Activated CD4-positive, alpha-beta T cell treated with anti-CD3 and anti-CD28 coated beads, Interleukin-2, amount 10 ng/mL, durations not matched to agents 24 days and 14 days (primary cell): ENCODE measurements at regions of chr15 and their contacts with region 1.

Region 1: DNA sequence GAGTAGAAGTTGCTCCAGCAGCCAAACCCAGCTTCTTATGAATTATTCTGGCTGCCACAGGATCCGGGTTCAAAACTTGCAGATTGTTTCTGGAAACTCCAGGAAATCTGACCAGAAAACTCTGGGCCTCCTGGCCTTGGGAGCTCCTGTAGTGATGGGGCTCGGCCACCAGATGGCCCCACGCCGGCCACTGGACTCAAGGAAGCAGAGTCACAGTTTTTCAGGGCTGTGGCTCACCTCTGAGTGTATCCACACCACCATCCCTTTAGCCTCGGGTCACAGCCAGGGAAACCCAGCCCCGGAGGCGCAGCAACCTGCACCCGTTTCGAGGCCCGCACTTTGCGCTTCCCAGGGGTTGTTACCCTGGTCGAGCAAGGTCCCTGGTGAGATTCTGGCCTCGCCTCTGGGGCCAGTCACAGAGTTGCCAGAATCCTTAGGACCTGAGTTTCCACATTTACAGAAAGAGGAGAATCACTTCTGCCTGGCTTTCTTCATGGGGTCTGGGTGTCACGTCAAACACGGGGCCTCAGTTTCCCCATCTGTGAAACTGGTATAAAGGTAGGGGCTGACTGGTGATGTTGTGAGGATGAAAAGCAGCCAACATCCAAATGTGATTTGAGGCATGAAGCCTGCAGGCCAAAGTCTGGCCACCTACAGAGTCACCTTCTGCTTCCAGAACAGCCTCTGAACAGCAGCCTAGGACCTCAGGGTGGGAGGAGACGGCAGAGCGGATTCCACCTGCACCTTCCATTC is 53.5 kb upstream of the LCTL start:
- DNase-seq: peak; percentile 85
- H3K4me3 Mint-ChIP-seq: no peak overlapping the region
- H3K27ac Mint-ChIP-seq: no peak overlapping the region
- H3K4me1 Mint-ChIP-seq: peaks cover 3% of the 10 kb centered on the region
- H3K27me3 Mint-ChIP-seq: peaks cover 22% of the 10 kb centered on the region

Region 2: GRCh38 chr15:66578286-66578875 is 40.9 kb before region 1 on chr15:
- intact Hi-C with region 1: no loop called
- DNase-seq: no peak
- H3K4me3 Mint-ChIP-seq: no peak overlapping the region
- H3K27ac Mint-ChIP-seq: peak overlapping the region; percentile 58
- H3K4me1 Mint-ChIP-seq: peaks cover 2% of the 10 kb centered on the region
- H3K27me3 Mint-ChIP-seq: no peaks in the 10 kb centered on the region

Region 3: GRCh38 chr15:66774001-66774814 is 154.9 kb after region 1 on chr15:
- intact Hi-C with region 1: loop called (anchors 1 kb)
- DNase-seq: peak; percentile 86
- H3K4me3 Mint-ChIP-seq: no peak overlapping the region
- H3K27ac Mint-ChIP-seq: no peak overlapping the region
- H3K4me1 Mint-ChIP-seq: no peaks in the 10 kb centered on the region
- H3K27me3 Mint-ChIP-seq: no peaks in the 10 kb centered on the region

Region 4: DNA sequence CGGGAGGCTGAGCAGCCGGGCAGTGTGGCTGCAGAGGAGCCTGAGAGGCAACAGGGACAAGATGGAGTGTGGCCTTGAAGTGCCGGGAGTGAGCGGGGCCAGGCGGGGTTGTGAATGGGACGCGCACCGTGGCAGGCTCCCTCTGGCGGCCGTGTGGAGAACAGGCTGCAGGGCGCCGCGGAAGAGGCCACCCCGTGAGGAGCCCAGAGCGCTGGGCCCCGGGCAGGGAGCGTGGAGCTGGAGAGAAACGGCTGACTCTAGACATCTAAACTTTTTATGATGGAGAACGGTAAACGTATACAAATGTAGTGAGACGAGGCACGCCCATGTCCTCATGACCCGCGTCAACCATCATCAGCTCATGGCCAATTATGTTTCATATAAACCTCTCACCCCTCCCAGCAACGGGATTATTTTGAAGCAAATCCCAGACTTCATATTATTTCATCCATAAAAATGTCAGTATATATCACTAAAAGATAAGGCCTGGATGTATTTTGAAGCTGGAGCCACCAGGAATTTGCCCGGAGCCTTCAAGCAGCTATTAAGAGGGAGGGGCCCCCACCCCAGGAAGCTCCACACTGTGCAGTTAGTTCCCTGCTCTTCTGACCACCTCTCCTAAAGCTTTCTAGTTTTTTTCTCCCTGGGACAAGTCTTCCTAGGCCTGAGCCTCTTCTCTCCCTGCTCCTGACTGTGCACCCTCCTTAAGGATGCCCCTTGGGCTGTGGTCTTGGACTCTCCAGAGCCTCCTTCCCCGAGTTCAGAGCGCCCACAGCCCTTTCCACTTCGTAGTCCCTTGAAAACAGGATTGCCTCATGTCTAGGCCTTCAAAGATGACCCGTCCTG is 232.1 kb after region 1 on chr15:
- intact Hi-C with region 1: loop called (anchors 1 kb)
- DNase-seq: peak; percentile 93
- H3K4me3 Mint-ChIP-seq: peak overlapping the region; percentile 26
- H3K27ac Mint-ChIP-seq: no peak overlapping the region
- H3K4me1 Mint-ChIP-seq: peaks cover 6% of the 10 kb centered on the region
- H3K27me3 Mint-ChIP-seq: peaks cover 11% of the 10 kb centered on the region